Activated T-helper 1 cell treated with anti-CD3 and anti-CD28 coated beads, Interleukin-12 subunit alpha, Interleukin-12 subunit beta, Interleukin-2, Interleukin-4 antibody, amounts not matched to agents 30 ng/mL and 10 ng/mL and 1 ng/mL, durations not matched to agents 14 hours and 24 hours and 36 hours (primary cell): ENCODE measurements at regions of chr17 and their contacts with region 1.

Region 1: DNA sequence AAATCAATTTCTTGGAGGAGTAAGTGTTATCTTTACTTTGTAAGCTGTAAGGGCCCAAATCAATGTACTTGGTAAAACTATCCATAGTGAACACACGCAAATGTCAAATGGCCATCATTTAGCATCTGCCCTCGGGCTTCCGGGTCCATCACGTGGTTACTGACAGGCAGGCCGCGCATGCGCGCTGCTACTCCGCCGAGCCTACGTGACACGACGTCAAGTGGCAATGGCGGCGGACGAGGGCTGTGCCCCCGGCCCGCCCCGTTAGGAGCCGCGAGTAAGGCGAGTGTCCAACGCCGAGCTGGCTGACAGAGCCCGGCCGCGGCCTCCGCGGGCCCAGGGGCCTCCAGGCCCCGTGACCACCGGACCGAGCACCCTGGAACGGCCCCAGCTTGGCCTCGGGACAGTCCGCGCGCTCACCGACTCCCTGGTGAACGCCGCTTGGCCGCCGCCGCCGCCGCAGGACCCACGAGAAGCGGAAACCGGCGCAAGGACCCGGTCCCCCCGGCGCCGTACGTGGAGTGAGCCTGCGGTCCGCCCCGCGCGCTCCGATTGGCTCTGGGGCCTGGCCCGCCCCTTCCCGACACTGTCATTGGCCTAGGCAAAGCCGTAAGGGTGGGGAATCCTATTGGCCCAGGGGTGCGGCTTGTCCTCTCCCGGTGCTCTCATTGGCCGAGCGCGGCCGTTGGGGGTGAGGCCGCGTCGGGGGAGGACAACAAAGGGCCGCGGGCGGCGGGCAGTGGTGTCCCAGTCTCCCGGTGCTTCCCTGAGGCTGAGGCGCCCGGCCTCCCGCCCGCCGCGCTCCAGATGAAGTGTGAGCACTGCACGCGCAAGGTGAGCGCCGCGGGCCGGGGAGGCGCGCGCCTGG is at the start of gene NARF:
- DNase-seq: peak; percentile 99
- H3K4me3 Mint-ChIP-seq: peak within 1 kb of the TSS; percentile 96
- H3K27ac Mint-ChIP-seq: peak within 1 kb of the TSS; percentile 95
- H3K4me1 Mint-ChIP-seq: peaks cover 45% of the 10 kb centered on the region
- H3K27me3 Mint-ChIP-seq: no peaks in the 10 kb centered on the region
- total RNA-seq, gene NARF: 99.0 and 103 TPM in 2 replicates

Region 2: DNA sequence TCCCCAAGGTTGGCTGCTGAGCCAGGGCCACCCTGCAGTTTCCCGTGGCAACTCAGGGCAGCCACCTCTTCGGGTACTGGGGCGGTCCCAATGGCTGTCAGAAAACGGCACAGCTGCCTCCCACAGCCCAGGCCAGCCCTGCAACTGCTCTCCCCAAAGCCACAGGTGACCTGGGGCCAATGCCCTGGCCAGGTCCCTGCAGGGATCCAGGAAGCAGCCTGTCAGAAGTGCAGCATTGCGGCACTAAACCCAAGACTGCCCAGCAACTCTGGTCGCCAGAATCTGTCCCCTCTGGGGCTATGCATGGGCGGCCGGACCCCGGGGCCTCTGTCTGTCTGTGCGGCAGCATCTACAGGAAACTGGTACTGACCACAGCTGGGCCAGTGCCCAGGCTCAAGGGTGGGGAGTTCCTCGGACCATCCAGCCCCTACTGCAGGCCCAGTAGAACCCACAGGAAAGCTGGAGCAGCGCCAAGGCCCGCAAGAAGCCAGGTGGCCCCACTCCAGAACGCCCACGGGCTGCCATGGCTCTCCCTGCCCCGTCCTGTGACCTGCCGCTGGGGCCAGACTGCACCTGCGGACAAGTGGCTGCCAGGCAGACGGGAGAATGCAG is 13.2 kb before region 1 on chr17:
- intact Hi-C with region 1: loop called (anchors 1 kb)
- DNase-seq: no peak
- H3K4me3 Mint-ChIP-seq: no peak overlapping the region
- H3K27ac Mint-ChIP-seq: no peak overlapping the region
- H3K4me1 Mint-ChIP-seq: peaks cover 11% of the 10 kb centered on the region
- H3K27me3 Mint-ChIP-seq: peaks cover 2% of the 10 kb centered on the region

Region 3: GRCh38 chr17:82494236-82495055 is 36.2 kb after region 1 on chr17:
- intact Hi-C with region 1: loop called (anchors 1 kb)
- DNase-seq: peak; percentile 81
- H3K4me3 Mint-ChIP-seq: peak overlapping the region; percentile 12
- H3K27ac Mint-ChIP-seq: peak overlapping the region; percentile 87
- H3K4me1 Mint-ChIP-seq: peaks cover 29% of the 10 kb centered on the region
- H3K27me3 Mint-ChIP-seq: peaks cover 2% of the 10 kb centered on the region

Region 4: GRCh38 chr17:82518826-82519810 is 60.9 kb after region 1 on chr17 and contains the start of gene FOXK2:
- intact Hi-C with region 1: loop called (anchors 1 kb)
- DNase-seq: peak; percentile 96
- H3K4me3 Mint-ChIP-seq: peak within 1 kb of the TSS; percentile 90
- H3K27ac Mint-ChIP-seq: peak within 1 kb of the TSS; percentile 92
- H3K4me1 Mint-ChIP-seq: peaks cover 14% of the 10 kb centered on the region
- H3K27me3 Mint-ChIP-seq: no peaks in the 10 kb centered on the region
- total RNA-seq, gene FOXK2: 97.7 and 98.1 TPM in 2 replicates

Region 5: GRCh38 chr17:82592767-82593589 is 134.7 kb after region 1 on chr17:
- intact Hi-C with region 1: loop called (anchors 1 kb)
- DNase-seq: peak; percentile 64
- H3K4me3 Mint-ChIP-seq: peak overlapping the region; percentile 80
- H3K27ac Mint-ChIP-seq: peak overlapping the region; percentile 90
- H3K4me1 Mint-ChIP-seq: peaks cover 38% of the 10 kb centered on the region
- H3K27me3 Mint-ChIP-seq: no peaks in the 10 kb centered on the region

Region 6: GRCh38 chr17:82751571-82752370 is 293.5 kb after region 1 on chr17 and contains the start of gene TBCD:
- intact Hi-C with region 1: loop called (anchors 1 kb)
- DNase-seq: peak; percentile 81
- H3K4me3 Mint-ChIP-seq: peak within 1 kb of the TSS; percentile 90
- H3K27ac Mint-ChIP-seq: peak within 1 kb of the TSS; percentile 61
- H3K4me1 Mint-ChIP-seq: peaks cover 27% of the 10 kb centered on the region
- H3K27me3 Mint-ChIP-seq: peaks cover 4% of the 10 kb centered on the region
- total RNA-seq, gene TBCD: 106 and 111 TPM in 2 replicates